ENCODE measurements at regions of chr17 and their contacts with region 1.

Region 1: DNA sequence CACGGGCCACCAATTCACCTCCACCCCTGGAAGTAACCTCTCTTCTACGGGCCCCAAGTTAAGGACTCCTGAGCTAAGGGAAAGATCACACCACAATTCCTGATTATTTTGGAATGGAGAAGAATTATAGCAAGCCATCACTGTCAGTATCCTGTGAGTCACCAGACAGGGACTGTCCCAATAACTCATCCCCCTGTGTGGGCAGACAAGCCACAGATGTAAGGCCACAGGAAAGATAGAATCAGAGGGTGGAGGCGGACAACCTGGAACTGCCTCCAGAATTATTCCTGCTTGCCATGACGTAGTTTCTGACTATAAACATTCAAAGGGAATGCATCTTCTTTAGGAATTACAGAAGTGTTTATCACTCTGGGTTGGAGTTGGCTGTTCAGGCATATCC is 5.8 kb upstream of the MYO1D start:
- DNase-seq: no peak
- ATAC-seq: peak; percentile 72
- H3K4me3 ChIP-seq: no peak overlapping the region
- H3K27ac ChIP-seq: no peak overlapping the region
- H3K4me1 ChIP-seq: no peaks in the 10 kb centered on the region
- H3K27me3 ChIP-seq: no peaks in the 10 kb centered on the region
- CTCF ChIP-seq: no peak
- EP300 ChIP-seq: no peak
- POLR2A ChIP-seq: no peak
- RAD21 ChIP-seq: no peak

Region 2: GRCh38 chr17:32697728-32698625 is 184.8 kb before region 1 on chr17:
- CTCF ChIA-PET with region 1: no interaction called
- POLR2A ChIA-PET with region 1: no interaction called
- RAD21 ChIA-PET with region 1: no interaction called
- SMC1A ChIA-PET with region 1: no interaction called
- in situ Hi-C with region 1: no loop called
- intact Hi-C with region 1: no loop called
- DNase-seq: no peak
- ATAC-seq: no peak
- H3K4me3 ChIP-seq: no peak overlapping the region
- H3K27ac ChIP-seq: no peak overlapping the region
- H3K4me1 ChIP-seq: no peaks in the 10 kb centered on the region
- H3K27me3 ChIP-seq: no peaks in the 10 kb centered on the region
- CTCF ChIP-seq: no peak
- EP300 ChIP-seq: no peak
- POLR2A ChIP-seq: no peak
- RAD21 ChIP-seq: no peak

Region 3: DNA sequence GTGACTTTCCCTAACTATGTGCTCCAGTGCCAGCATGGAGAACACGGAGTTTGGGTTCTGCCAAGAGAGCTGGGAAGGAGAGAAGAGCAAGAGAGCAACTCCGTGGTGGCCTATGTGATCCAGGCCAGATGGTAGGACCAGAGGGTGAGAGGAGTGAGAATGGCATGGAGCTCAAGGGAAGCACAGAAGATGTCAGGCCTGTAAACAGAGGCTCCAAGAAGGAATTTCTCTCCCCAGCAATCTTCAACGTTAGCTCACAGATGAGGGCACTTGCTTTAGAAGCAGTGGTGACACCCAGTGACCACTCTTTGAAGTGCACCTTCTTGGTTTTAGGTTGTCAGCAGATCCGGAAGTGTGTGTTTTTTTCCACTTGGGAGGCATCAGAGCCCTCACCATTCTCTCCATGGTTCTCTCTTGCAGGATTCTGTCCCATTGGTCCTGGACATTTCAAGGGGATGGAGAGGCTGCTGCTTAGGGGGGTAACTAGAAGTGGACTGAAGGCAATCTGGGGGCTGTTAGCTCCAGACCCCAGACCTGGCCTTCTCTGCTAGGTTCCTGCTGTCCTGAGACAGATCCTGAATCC is 27.1 kb after region 1 on chr17:
- CTCF ChIA-PET with region 1: interaction called, 139 read pairs
- POLR2A ChIA-PET with region 1: interaction called, 3 read pairs
- RAD21 ChIA-PET with region 1: interaction called, 60 read pairs
- SMC1A ChIA-PET with region 1: interaction called, 96 read pairs
- in situ Hi-C with region 1: no loop called
- intact Hi-C with region 1: no loop called
- DNase-seq: peak; percentile 46
- ATAC-seq: peak; percentile 97
- H3K4me3 ChIP-seq: no peak overlapping the region
- H3K27ac ChIP-seq: no peak overlapping the region
- H3K4me1 ChIP-seq: no peaks in the 10 kb centered on the region
- H3K27me3 ChIP-seq: no peaks in the 10 kb centered on the region
- CTCF ChIP-seq: peak; percentile 85 to 94 (median 91)
- EP300 ChIP-seq: no peak
- POLR2A ChIP-seq: no peak
- RAD21 ChIP-seq: peak; percentile 87

Region 4: DNA sequence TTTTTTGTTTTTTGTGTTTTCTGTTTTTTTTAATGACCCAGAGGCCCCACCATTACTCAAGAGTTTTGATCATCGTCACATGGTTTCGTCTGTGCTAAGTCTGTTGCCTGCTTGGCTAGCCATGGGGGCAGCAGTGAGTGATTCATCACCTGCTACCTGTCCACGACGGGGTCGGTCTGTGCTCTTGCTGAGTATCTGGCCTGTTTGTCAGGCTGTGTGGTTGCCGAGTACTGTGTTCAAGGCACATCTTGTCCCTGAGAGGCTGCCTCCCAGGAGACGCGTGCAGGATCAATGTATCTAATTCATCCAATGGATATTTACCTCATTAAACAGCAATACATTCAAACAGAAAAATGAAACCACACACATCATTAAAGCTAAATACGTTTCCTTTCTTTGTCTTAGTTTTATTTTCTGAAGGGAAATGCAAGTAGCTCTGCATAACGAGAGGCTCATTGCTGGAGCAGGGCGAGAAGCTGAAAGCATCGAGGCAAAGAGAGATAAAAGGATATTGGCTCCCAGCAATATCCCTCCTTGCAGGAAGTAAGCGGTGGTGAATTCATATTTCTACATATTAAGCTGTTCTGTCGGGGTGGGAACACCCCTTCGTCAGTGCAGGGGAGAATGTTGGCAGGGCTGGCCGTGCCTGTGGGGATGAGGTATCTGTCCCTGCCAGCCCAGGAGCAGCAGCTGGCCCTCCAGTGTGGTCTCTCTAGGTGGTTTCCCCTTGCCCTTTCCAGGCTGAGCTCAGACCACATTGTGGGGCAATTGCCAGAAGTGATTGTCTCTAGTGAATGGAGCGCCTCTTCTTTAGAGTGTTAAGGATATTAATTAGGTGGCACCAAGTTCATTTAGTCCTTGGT is 576.6 kb after region 1 on chr17:
- CTCF ChIA-PET with region 1: no interaction called
- POLR2A ChIA-PET with region 1: no interaction called
- RAD21 ChIA-PET with region 1: no interaction called
- SMC1A ChIA-PET with region 1: no interaction called
- in situ Hi-C with region 1: no loop called
- intact Hi-C with region 1: no loop called
- DNase-seq: peak; percentile 44
- ATAC-seq: peak; percentile 93
- H3K4me3 ChIP-seq: no peak overlapping the region
- H3K27ac ChIP-seq: no peak overlapping the region
- H3K4me1 ChIP-seq: peaks cover 3% of the 10 kb centered on the region; the same call in 1 of the 2 replicates
- H3K27me3 ChIP-seq: no peaks in the 10 kb centered on the region
- CTCF ChIP-seq: peak in 2 of 3 experiments; percentile 10 to 35; a peak in 2 of 6 replicates
- EP300 ChIP-seq: peak; percentile 21 to 44; a peak in 1 of 4 replicates
- POLR2A ChIP-seq: no peak
- RAD21 ChIP-seq: no peak

Measured in GM12878 (cell line).